ENCODE measurements at regions of chr11 and their contacts with region 1.

Region 1: GRCh38 chr11:73184953-73185671 is 33.0 kb upstream of the P2RY2 start:
- DNase-seq: peak; percentile 87
- H3K4me3 Mint-ChIP-seq: peak overlapping the region; percentile 53
- H3K27ac Mint-ChIP-seq: no peak overlapping the region
- H3K4me1 Mint-ChIP-seq: peaks cover 28% of the 10 kb centered on the region
- H3K27me3 Mint-ChIP-seq: no peaks in the 10 kb centered on the region
- CTCF ChIP-seq: peak; percentile 92

Region 2: DNA sequence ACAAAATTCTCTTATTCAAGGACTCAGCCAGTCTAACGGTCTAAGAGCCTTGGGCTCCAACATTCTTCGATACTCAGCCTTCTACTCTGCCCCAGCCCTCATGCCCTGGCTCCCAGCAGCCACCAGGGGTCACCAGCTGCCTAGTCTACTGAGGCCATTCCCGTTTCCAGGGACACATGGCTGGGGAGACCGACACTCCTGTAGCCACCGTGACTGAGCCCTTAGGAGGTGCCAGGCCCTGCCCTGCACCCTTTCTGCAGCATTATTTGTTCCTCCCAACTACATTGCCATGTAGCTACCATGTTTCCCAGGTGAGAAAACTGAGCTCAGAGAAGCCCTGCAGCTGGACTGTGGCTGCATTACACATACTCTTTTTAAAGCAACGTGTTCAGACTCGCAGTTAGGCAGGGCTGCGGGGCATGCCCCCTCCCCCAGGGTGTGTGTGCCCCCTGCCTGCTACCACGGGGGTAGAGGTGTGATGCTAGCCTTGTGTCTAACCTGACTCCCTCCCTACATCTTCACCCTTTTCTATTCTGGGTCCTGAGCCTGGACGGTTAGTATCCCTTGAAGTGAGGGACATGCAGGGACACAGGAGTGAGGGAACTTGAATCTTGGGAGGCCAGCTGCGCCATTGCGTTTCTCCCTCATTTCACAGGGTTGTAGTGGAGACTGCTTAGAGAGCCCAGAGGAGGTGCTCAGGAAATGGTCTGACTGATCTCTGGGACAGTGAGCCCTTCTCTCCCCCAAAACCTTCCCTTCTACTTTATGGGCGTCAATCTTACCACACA is 353.4 kb before region 1 on chr11:
- CTCF ChIA-PET with region 1: interaction called, 153 read pairs
- POLR2A ChIA-PET with region 1: interaction called, 4 read pairs
- intact Hi-C with region 1: no loop called
- DNase-seq: peak; percentile 82
- H3K4me3 Mint-ChIP-seq: no peak overlapping the region
- H3K27ac Mint-ChIP-seq: no peak overlapping the region
- H3K4me1 Mint-ChIP-seq: peaks cover 9% of the 10 kb centered on the region
- H3K27me3 Mint-ChIP-seq: no peaks in the 10 kb centered on the region
- CTCF ChIP-seq: peak; percentile 93

Region 3: DNA sequence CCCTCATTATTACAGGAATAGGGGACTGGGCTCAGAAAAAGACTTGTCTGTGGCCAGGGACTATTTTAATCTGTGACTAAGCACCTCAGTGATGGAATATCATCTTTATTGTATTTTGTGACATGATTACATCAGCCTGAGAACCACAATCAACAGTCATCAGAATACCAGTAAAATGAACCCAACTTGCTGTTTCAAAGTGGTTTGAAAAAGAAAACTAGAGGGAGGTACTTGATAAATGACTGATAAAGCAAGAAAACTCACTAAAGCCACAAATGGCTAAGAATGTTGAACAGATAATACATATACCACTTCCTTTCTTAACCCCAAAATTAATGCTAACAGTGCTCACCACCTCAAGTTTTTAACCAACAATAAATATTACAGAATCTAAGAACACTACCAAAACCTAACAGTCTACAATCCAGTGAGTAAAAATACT is 215.2 kb before region 1 on chr11:
- CTCF ChIA-PET with region 1: no interaction called
- POLR2A ChIA-PET with region 1: no interaction called
- intact Hi-C with region 1: no loop called
- DNase-seq: peak; percentile 27
- H3K4me3 Mint-ChIP-seq: no peak overlapping the region
- H3K27ac Mint-ChIP-seq: no peak overlapping the region
- H3K4me1 Mint-ChIP-seq: peaks cover 29% of the 10 kb centered on the region
- H3K27me3 Mint-ChIP-seq: no peaks in the 10 kb centered on the region
- CTCF ChIP-seq: no peak

Region 4: GRCh38 chr11:73201249-73201648 is 16.1 kb after region 1 on chr11:
- CTCF ChIA-PET with region 1: interaction called, 18 read pairs
- POLR2A ChIA-PET with region 1: interaction called, 13 read pairs
- intact Hi-C with region 1: no loop called
- DNase-seq: peak; percentile 69
- H3K4me3 Mint-ChIP-seq: no peak overlapping the region
- H3K27ac Mint-ChIP-seq: peak overlapping the region; percentile 78
- H3K4me1 Mint-ChIP-seq: peaks cover 26% of the 10 kb centered on the region
- H3K27me3 Mint-ChIP-seq: no peaks in the 10 kb centered on the region
- CTCF ChIP-seq: no peak

Region 5: DNA sequence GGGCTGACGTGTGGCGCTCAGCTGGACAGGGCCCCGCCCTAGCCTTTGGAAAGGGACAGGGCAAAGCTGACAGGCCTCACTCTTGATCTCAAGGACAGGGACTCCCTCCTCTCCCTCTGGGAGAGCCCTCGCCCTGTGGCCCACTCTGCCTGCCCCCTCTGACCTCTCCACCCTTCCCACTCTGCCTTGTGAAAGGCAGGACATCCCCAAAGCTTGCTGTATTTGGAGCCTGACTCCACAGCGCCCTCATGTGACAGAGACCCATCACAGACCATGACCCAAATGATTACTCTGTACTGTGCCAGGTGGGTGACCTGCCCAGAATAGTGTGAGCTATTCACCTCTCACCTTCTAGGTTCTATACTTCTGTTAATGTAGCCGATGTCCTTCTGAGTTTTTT is 51.7 kb after region 1 on chr11:
- CTCF ChIA-PET with region 1: interaction called, 238 read pairs
- POLR2A ChIA-PET with region 1: interaction called, 43 read pairs
- intact Hi-C with region 1: loop called (anchors 1 kb)
- DNase-seq: peak; percentile 75
- H3K4me3 Mint-ChIP-seq: no peak overlapping the region
- H3K27ac Mint-ChIP-seq: no peak overlapping the region
- H3K4me1 Mint-ChIP-seq: no peaks in the 10 kb centered on the region
- H3K27me3 Mint-ChIP-seq: no peaks in the 10 kb centered on the region
- CTCF ChIP-seq: peak; percentile 62

Region 6: DNA sequence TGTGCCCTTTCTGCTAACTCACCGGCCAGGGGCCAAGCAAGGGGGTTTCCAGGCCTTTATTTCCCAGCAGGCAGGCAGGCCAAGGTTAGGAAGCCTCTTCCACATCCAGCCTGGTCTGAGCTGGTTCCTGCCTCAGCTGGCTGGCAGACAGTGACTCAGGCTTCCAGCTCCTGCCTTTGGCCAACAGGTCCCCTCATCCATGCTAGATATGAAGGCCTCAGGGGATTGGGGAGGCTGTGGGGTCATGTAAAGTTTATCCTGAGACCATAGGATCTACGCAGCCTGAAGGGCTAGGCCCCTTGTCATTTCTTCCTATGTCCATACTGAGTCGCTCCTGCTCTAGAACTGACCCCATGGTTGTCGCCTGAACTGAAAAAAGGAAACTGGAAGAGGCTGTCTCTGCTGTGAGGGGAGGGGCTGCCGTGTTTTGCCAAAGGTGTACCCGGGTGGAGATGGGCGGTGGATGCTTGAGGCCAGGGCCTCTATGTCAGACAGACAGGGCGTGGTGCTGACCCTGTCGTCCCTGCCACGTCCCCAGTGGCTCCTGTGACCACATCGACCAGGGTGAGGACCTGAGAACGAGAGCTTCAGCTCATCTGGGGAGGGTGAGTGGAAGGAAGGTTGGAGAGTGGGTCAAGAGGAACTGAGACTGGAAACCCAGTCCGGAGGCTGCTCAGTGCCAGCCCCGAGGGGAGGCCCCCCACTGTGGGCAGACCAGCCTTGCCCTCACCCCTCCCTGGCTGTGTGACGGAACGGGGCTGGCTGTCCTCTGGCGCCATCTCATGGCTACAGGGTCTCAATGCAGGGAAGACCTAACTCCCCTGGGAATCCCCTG is 104.0 kb after region 1 on chr11:
- CTCF ChIA-PET with region 1: interaction called, 13 read pairs
- POLR2A ChIA-PET with region 1: no interaction called
- intact Hi-C with region 1: loop called (anchors 1 kb)
- DNase-seq: peak; percentile 72
- H3K4me3 Mint-ChIP-seq: no peak overlapping the region
- H3K27ac Mint-ChIP-seq: no peak overlapping the region
- H3K4me1 Mint-ChIP-seq: peaks cover 6% of the 10 kb centered on the region
- H3K27me3 Mint-ChIP-seq: no peaks in the 10 kb centered on the region
- CTCF ChIP-seq: peak; percentile 97

Measured in MCF 10A (cell line).